ENCODE measurements at regions of chr7 and their contacts with region 1.

Region 1: GRCh38 chr7:150737265-150738055 is at the start of gene GIMAP5:
- DNase-seq: peak; percentile 77
- H3K4me3 Mint-ChIP-seq: peak within 1 kb of the TSS; percentile 87
- H3K27ac Mint-ChIP-seq: peak within 1 kb of the TSS; percentile 97
- H3K4me1 Mint-ChIP-seq: peaks cover 72% of the 10 kb centered on the region
- H3K27me3 Mint-ChIP-seq: no peaks in the 10 kb centered on the region
- total RNA-seq, gene GIMAP5: 45.9 to 48.3 TPM

Region 2: DNA sequence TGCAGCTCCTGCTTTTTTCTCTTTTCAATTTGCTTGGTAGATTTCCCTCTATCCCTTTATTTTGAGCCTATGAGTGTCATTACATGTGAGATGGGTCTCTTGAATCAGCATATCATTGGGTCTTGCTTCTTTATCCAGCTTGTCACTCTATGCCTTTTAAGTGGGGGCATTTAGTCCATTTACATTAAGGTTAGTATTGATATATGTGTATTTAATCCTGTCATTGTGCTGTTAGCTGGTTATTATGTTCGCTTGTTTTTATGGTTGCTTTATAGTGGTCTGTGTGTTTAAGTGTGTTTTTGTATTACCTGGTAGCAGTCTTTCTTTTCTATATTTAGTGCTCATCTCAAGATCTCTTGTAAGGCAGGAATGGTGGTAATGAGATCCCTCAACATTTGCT is 205.8 kb before region 1 on chr7:
- CTCF ChIA-PET with region 1: no interaction called
- POLR2A ChIA-PET with region 1: no interaction called
- intact Hi-C with region 1: no loop called
- DNase-seq: no peak
- H3K4me3 Mint-ChIP-seq: no peak overlapping the region
- H3K27ac Mint-ChIP-seq: no peak overlapping the region
- H3K4me1 Mint-ChIP-seq: peaks cover 6% of the 10 kb centered on the region
- H3K27me3 Mint-ChIP-seq: no peaks in the 10 kb centered on the region

Region 3: DNA sequence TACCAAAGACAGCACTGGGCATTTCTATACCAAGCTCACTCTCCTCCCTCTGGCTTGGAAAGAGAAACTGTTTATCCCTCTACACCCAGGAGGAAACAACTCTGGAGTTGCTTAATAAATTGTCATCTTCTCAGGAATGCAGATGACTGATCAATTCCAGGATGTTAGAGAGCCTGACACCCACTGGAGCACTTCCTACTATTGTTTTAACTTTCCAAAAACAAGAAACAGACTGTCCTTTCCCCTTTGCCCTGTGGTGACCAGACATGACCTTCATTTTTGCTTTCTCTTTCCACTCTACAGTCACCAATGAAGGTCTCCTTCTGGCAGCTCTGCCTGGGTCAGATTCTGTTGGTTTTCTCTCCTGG is 150.7 kb before region 1 on chr7:
- CTCF ChIA-PET with region 1: interaction called, 3 read pairs
- POLR2A ChIA-PET with region 1: interaction called, 3 read pairs
- intact Hi-C with region 1: loop called (anchors 1 kb)
- DNase-seq: peak; percentile 48
- H3K4me3 Mint-ChIP-seq: peak overlapping the region; percentile 28
- H3K27ac Mint-ChIP-seq: peak overlapping the region; percentile 84
- H3K4me1 Mint-ChIP-seq: peaks cover 51% of the 10 kb centered on the region
- H3K27me3 Mint-ChIP-seq: no peaks in the 10 kb centered on the region

Region 4: DNA sequence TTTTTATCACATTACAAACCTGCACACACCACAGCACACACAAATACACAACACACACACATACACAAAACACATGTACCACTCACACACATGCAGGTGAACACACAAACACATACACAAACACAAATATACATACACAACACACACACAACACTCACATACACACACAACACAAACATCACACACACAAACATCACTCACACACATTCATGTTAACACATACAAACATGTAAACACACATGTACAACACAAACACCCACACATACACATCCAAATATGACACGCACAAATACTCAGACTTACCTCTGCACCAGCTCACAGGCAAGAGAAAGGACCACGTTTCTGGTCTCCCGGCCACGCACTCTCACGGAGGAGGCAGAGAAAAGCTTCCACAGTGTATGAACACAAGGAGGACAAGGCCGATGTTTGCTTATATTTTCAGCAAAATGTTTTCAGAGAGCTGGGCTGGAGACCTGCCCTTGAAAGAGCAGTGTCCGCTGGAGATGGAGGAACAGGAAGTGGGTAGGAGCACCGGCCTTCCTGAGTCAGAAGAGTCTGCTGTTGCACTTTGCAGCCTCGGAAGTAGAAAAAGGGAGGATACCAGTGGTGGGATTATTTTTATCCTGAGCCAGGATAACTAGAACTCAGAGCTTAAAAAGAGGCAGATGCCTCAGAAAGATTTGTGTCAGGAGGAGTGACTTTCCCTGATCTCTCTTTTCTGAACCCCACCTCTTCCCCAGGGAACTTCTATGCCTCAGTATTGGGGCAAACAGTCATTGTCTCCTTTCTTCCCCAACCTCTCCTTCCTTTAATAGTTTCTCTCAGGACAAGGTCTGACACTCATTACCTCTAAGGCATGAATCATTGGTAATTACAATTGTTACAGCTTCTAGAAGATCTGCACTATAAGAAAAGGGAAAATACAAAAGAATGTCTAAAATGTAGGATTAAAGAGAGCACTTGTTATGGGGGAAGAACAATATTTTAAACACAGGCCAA is 105.3 kb before region 1 on chr7 and contains the start of gene GIMAP6:
- CTCF ChIA-PET with region 1: interaction called, 4 read pairs
- POLR2A ChIA-PET with region 1: interaction called, 12 read pairs
- intact Hi-C with region 1: loop called (anchors 2 kb)
- DNase-seq: peak; percentile 62
- H3K4me3 Mint-ChIP-seq: peak within 1 kb of the TSS; percentile 93
- H3K27ac Mint-ChIP-seq: peak within 1 kb of the TSS; percentile 97
- H3K4me1 Mint-ChIP-seq: peaks cover 76% of the 10 kb centered on the region
- H3K27me3 Mint-ChIP-seq: no peaks in the 10 kb centered on the region
- total RNA-seq, gene GIMAP6: 28.9 to 30.2 TPM

Region 5: GRCh38 chr7:150685219-150686029 is 52.0 kb before region 1 on chr7 and contains the start of gene GIMAP2:
- CTCF ChIA-PET with region 1: interaction called, 6 read pairs
- POLR2A ChIA-PET with region 1: interaction called, 19 read pairs
- intact Hi-C with region 1: loop called (anchors 2 kb)
- DNase-seq: peak; percentile 40
- H3K4me3 Mint-ChIP-seq: peak within 1 kb of the TSS; percentile 98
- H3K27ac Mint-ChIP-seq: peak within 1 kb of the TSS; percentile 99
- H3K4me1 Mint-ChIP-seq: peaks cover 77% of the 10 kb centered on the region
- H3K27me3 Mint-ChIP-seq: no peaks in the 10 kb centered on the region
- total RNA-seq, gene GIMAP2: 38.8 to 44.1 TPM

Region 6: DNA sequence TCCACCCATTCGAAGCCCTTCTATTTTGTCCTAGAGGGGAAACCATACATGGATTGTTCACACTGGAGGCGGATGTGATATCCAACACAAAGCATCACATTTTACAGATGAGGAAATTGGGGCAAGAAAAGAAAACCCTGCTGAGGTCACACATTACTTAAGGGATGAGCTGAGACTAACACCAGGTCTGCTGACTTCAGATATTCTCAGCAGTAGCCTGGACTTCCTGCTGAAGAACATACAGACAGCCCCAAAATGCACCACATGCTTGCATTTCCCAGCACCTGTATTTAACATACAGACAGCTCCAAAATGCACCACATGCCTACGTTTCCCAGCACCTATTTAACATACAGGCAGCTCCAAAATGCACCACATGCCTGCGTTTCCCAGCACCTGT is 10.9 kb after region 1 on chr7:
- CTCF ChIA-PET with region 1: interaction called, 7 read pairs
- POLR2A ChIA-PET with region 1: interaction called, 18 read pairs
- intact Hi-C with region 1: no loop called
- DNase-seq: no peak
- H3K4me3 Mint-ChIP-seq: no peak overlapping the region
- H3K27ac Mint-ChIP-seq: peak overlapping the region; percentile 87
- H3K4me1 Mint-ChIP-seq: peaks cover 87% of the 10 kb centered on the region
- H3K27me3 Mint-ChIP-seq: no peaks in the 10 kb centered on the region

Region 7: DNA sequence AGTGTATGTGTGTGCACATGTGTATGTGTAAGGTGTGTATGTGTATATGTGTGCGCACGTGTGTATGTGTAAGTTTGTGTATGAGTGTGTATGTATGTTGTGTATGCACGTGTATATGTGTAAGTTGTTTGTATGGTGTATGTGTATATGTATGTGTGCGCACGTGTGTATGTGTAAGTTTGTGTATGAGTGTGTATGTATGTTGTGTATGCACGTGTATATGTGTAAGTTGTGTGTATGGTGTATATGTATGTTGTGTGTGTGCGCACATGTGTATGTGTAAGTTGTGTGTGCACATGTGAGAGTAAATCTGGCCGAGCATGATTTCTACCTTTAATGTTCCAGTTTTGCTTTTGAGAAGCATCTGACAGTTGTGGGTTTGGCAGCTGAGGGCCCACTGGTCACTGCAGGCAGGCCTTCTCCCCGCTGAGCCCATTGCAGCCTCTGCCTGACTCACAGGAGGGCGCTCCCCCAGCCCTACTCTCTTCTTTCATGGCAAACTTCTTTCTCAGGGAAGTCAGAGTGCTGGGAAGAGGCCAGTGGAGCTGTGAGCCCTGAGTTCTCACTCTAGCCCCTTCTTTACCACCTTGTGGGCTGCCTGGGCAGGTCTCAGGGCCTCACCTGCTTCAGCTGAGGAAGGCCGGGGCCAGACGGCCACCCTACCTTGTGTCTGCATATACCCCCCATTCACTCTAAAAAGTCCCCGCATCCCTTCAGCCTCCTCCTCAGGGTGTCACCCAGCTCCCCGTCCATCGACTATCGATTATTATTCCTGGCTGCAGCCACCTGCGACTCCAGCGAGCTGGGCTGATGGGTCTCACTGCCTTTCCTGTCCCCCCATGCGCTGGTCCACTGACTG is 661.2 kb after region 1 on chr7:
- CTCF ChIA-PET with region 1: no interaction called
- POLR2A ChIA-PET with region 1: no interaction called
- intact Hi-C with region 1: no loop called
- DNase-seq: no peak
- H3K4me3 Mint-ChIP-seq: no peak overlapping the region
- H3K27ac Mint-ChIP-seq: no peak overlapping the region
- H3K4me1 Mint-ChIP-seq: peaks cover 2% of the 10 kb centered on the region
- H3K27me3 Mint-ChIP-seq: no peaks in the 10 kb centered on the region

Measured in activated CD4-positive, alpha-beta memory T cell treated with anti-CD3 and anti-CD28 coated beads for 36 hours (primary cell).